Activated T-helper 2 cell treated with anti-CD3 and anti-CD28 coated beads, Interferon-gamma antibody, Interleukin-2, Interleukin-4, amounts not matched to agents 10 μg/mL and 5 μg/mL and 100 μg/mL, durations not matched to agents 14 hours and 24 hours and 36 hours (primary cell): ENCODE measurements at regions of chr5 and their contacts with region 1.

Region 1: DNA sequence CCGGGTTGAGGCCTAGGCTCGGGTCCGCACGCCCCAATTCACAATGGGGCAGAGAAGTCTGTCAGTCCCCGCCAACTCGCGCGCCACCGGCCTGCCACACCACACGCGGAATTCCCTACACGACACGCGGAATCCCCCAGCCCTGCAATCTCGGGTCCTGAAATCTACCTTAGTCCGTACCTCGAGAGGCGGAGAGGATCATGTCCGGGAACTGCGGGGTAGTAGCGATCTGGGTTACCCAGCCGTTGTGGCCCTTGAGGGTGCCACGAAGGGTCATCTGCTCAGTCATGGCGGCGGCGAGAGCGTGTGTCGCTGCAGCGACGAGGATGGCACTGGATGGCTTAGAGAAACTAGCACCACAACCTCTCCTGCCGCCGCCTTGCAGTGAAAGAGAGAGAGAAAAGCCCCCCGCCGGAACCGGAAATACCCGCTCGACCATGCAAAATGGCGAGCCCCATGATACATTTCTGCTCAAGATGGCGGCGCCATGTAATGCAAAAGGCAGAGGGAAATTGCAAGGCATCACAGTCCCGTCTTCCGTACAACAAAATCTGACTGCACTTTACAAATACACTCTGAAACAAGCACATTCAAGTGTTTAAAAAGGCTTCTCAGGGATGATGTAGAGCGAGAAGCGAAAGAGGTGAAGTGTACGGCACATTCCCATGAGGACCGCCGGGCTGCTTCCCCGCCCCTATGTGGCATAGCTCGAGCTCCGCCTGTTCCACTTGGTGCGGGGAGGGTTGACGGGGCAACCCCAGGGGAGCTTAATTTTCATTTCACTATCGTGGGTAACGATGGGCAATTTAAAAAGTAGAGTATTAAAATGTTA is at the start of gene RACK1:
- DNase-seq: peak; percentile 85
- H3K4me3 Mint-ChIP-seq: peak within 1 kb of the TSS; percentile 98
- H3K27ac Mint-ChIP-seq: peak within 1 kb of the TSS; percentile 99
- H3K4me1 Mint-ChIP-seq: peaks cover 39% of the 10 kb centered on the region
- H3K27me3 Mint-ChIP-seq: no peaks in the 10 kb centered on the region
- total RNA-seq, gene RACK1: 2,110 and 2,123 TPM in 2 replicates

Region 2: DNA sequence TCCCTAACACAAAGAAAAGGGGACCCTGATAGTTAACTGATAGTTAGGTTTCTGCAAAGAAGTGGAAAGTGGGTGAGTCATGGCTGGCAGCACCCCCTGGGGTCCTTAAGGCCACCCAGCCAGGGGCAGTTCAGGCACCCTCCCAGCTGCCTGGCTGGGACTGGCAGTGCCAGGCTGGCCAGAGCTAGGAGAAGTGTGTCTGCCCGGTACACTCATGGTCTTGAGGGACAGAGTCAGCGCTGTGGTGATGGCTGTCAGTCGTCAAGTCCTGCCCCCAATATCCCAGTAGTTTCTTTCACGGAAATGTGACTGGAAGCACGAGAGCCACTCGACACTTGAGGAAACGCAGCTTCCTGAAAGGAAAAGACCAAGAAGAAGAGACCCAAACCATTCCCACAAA is 771.9 kb before region 1 on chr5:
- intact Hi-C with region 1: no loop called
- DNase-seq: no peak
- H3K4me3 Mint-ChIP-seq: no peak overlapping the region
- H3K27ac Mint-ChIP-seq: no peak overlapping the region
- H3K4me1 Mint-ChIP-seq: no peaks in the 10 kb centered on the region
- H3K27me3 Mint-ChIP-seq: peaks cover 7% of the 10 kb centered on the region

Region 3: GRCh38 chr5:180802325-180803180 is 441.2 kb before region 1 on chr5 and contains the start of gene MGAT1:
- intact Hi-C with region 1: loop called (anchors 5 kb)
- DNase-seq: peak; percentile 66
- H3K4me3 Mint-ChIP-seq: peak within 1 kb of the TSS; percentile 92
- H3K27ac Mint-ChIP-seq: peak within 1 kb of the TSS; percentile 91
- H3K4me1 Mint-ChIP-seq: peaks cover 74% of the 10 kb centered on the region
- H3K27me3 Mint-ChIP-seq: no peaks in the 10 kb centered on the region
- total RNA-seq, gene MGAT1: 122 TPM in 2 replicates

Region 4: GRCh38 chr5:181052672-181053487 is 190.8 kb before region 1 on chr5:
- intact Hi-C with region 1: no loop called
- DNase-seq: no peak
- H3K4me3 Mint-ChIP-seq: peak overlapping the region; percentile 58
- H3K27ac Mint-ChIP-seq: no peak overlapping the region
- H3K4me1 Mint-ChIP-seq: peaks cover 12% of the 10 kb centered on the region
- H3K27me3 Mint-ChIP-seq: peaks cover 74% of the 10 kb centered on the region

Region 5: GRCh38 chr5:181207214-181208107 is 36.3 kb before region 1 on chr5:
- intact Hi-C with region 1: loop called (anchors 1 kb)
- DNase-seq: peak; percentile 74
- H3K4me3 Mint-ChIP-seq: peak overlapping the region; percentile 90
- H3K27ac Mint-ChIP-seq: peak overlapping the region; percentile 92
- H3K4me1 Mint-ChIP-seq: peaks cover 31% of the 10 kb centered on the region
- H3K27me3 Mint-ChIP-seq: peaks cover 24% of the 10 kb centered on the region

Region 6: GRCh38 chr5:181223058-181223728 is 20.5 kb before region 1 on chr5 and contains the start of gene TRIM41:
- intact Hi-C with region 1: loop called (anchors 1 kb)
- DNase-seq: peak; percentile 96
- H3K4me3 Mint-ChIP-seq: peak within 1 kb of the TSS; percentile 97
- H3K27ac Mint-ChIP-seq: peak within 1 kb of the TSS; percentile 98
- H3K4me1 Mint-ChIP-seq: peaks cover 55% of the 10 kb centered on the region
- H3K27me3 Mint-ChIP-seq: peaks cover 2% of the 10 kb centered on the region
- total RNA-seq, gene TRIM41: 32.2 and 33.0 TPM in 2 replicates

Region 7: DNA sequence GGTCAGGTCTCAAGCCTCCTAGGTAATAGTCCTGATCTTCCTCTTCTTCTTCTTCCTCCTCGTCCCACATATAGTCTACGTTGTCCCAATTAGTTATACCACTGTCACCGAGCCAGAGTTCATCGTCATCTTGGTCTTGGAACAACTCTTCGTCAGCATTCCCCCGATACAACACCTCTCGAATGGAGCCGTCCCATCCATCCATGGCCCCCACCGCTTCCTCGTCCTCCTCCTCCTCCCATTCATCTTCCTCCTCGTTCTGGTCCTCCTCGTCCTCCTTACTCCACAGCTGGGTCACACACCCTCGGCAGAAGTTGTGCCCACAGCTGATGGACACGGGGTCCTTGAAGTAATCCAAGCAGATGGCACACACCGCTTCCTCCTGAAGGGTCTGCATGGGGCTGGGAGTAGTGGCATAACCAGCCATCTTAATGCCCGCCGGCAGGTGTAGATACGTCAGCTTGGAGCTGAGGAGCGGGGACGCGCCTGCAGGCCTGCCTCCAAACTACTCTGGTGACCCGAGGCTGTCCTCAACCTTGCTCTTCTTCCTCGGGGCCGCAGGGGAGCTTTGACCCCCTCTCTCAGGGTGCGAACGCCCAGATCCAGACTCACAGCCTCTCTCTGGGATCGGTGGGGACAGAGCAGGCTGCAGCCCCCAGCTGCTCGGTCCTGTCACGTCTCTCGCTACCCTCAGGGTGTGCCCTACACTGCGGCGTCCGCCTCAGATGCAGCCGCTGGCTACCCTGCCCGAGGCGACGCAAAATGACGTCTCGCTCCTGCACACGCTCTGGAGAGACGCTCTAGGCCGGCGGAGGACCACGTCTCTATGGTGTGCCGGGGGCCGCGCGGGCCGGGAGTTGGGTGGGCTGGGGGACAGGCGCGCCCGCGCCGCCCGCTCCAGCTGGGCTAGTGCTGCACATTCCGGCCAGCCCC is 16.9 kb after region 1 on chr5 and contains the start of gene TRIM52:
- intact Hi-C with region 1: loop called (anchors 1 kb)
- DNase-seq: peak; percentile 88
- H3K4me3 Mint-ChIP-seq: peak within 1 kb of the TSS; percentile 99
- H3K27ac Mint-ChIP-seq: peak within 1 kb of the TSS; percentile 94
- H3K4me1 Mint-ChIP-seq: peaks cover 40% of the 10 kb centered on the region
- H3K27me3 Mint-ChIP-seq: no peaks in the 10 kb centered on the region
- total RNA-seq, gene TRIM52: 15.5 and 16.9 TPM in 2 replicates